Activated CD4-positive, alpha-beta T cell treated with anti-CD3 and anti-CD28 coated beads for 36 hours (primary cell): ENCODE measurements at regions of chr7 and their contacts with region 1.

Region 1: DNA sequence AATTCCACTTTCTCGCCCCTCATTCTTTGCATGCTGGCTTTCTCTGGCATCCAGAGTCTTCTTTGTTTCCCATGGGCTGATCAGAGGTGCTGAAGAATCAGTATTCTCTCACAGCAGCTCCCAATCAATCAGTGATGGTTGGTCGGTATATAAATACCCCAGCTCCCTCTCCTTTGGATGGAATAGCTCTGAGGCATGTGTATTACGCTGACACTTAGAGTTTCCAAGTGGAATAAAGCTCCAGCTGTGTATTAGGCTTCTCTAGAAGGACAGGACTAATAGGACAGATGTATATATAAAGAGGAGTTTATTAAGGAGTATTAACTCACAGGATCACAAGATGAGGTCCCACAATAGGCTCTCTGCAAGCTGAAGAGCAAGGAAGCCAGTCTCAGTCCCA is 218.3 kb upstream of the GRB10 start:
- DNase-seq: no peak
- ATAC-seq: no peak
- H3K4me3 Mint-ChIP-seq: no peak overlapping the region
- H3K27ac Mint-ChIP-seq: no peak overlapping the region
- H3K4me1 Mint-ChIP-seq: no peaks in the 10 kb centered on the region
- H3K27me3 Mint-ChIP-seq: no peaks in the 10 kb centered on the region

Region 2: DNA sequence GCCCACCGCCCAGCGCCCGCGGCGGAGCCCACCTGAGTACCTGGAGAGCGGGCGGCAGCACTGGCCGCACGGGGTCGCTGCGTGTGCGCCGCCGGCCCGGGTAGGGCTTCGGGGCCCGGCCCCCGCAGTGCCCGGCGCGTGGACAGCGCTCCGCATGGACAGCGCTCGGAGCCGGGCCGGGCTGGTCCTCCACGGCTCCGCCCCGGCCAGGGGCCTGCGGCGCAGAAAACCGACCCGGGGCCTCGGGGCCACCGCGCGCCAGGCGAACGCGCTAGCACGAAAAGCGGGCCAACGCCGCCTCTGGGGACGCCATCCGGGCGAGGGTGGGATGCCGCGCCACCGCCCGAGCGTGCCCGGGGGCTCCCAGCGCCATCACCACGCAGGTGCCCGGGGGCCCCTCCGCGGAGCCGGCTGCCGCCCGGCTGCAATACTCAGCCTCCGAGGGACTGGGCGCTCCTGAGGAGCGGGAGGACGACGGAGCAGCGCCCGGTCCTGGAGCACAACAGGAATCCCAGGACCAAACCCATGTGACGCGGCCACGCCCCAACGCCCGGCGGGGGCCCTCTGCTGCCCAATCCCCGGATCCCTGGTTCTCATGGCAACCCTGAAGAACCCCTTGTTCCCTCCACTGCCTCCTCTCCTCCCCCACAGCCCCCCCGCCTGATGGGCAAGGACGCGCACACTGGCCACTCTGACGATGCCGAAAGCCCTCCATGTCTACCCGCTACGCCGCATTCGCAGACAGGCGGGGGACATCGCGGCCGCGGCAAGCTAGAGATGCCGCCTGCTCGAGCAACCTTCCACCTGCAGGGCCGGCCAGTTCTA is 218.4 kb before region 1 on chr7 and contains the start of gene GRB10:
- CTCF ChIA-PET with region 1: no interaction called
- POLR2A ChIA-PET with region 1: no interaction called
- intact Hi-C with region 1: loop called in 1 of 2 experiments (anchors 1 kb)
- DNase-seq: no peak
- ATAC-seq: no peak
- H3K4me3 Mint-ChIP-seq: peak within 1 kb of the TSS; percentile 49
- H3K27ac Mint-ChIP-seq: peak within 1 kb of the TSS; percentile 48
- H3K4me1 Mint-ChIP-seq: peaks cover 16% of the 10 kb centered on the region
- H3K27me3 Mint-ChIP-seq: peaks cover 28% of the 10 kb centered on the region
- total RNA-seq, gene GRB10: 9.5 to 11.9 TPM

Region 3: DNA sequence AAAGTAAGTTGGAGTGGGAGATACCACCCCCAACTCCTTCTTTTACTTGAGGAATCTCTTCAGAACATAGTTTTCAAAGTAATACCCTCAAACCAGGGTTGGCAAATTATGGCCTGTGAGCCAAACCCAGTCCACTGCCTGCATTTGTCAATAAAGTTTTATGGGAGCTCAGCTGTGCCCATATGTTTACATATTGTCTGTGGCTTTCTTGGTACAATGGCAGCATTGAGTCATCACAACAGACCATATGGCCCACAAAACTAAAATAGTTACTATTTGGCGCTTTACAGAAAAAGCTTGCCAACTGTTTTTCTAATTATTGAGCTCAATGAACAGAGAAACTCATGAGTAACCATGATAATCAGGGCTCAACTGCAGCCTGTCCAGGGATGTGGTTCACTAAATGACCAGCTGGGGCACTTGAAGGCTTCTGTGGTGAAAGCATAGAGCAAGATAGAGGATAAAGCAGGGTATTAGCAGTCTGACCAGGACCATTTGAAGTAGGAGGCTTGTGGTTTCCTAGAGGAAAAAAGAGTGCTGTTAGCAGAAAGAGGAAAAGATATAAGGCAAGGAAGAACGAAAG is 22.2 kb before region 1 on chr7:
- CTCF ChIA-PET with region 1: no interaction called
- POLR2A ChIA-PET with region 1: no interaction called
- intact Hi-C with region 1: no loop called
- DNase-seq: no peak
- ATAC-seq: no peak
- H3K4me3 Mint-ChIP-seq: no peak overlapping the region
- H3K27ac Mint-ChIP-seq: no peak overlapping the region
- H3K4me1 Mint-ChIP-seq: no peaks in the 10 kb centered on the region
- H3K27me3 Mint-ChIP-seq: peaks cover 5% of the 10 kb centered on the region